ENCODE measurements at regions of chr5 and their contacts with region 1.

Region 1: DNA sequence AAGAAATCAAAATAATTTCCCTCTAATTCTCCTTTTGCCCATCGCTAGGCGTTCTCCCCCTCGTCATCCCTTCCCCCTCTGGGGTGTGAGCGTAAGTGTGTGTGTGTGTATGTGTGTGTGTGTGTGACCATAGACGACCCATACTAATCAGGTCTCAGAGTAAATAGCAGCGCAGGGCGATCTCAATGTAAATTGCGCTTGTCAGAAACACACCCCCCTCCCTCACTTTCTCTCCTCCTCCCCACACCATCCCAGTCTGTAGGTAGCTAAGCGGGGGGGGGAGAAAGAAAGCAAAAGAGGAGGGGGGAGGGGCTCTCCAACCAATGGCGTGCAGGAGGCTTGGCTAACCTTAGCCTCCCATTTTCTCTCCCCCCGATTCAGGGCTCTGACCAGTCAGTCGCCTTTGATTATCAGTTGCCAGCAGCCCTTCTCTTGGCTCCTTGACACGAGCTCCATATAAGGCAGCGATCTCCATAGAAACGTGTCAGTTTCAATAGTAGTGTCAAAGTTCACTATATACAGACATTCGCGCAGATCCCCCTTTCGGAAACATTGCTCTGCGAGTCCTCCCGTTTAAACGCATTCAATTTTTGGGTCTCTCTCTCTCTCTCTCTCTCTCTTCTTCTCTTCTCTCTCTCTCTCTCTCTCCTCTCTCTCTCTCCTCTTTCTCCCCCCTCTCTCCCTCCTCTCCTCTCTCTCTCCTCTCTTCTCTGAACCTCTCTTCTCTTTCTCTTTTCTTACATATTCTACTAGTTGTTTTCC is at the start of gene NR2F1:
- DNase-seq: peak; percentile 74
- H3K4me3 ChIP-seq: peak within 1 kb of the TSS; percentile 75
- H3K27me3 ChIP-seq: no peaks in the 10 kb centered on the region
- CTCF ChIP-seq: no peak
- polyA plus RNA-seq, gene NR2F1: 24.6 and 39.4 TPM in 2 replicates

Region 2: DNA sequence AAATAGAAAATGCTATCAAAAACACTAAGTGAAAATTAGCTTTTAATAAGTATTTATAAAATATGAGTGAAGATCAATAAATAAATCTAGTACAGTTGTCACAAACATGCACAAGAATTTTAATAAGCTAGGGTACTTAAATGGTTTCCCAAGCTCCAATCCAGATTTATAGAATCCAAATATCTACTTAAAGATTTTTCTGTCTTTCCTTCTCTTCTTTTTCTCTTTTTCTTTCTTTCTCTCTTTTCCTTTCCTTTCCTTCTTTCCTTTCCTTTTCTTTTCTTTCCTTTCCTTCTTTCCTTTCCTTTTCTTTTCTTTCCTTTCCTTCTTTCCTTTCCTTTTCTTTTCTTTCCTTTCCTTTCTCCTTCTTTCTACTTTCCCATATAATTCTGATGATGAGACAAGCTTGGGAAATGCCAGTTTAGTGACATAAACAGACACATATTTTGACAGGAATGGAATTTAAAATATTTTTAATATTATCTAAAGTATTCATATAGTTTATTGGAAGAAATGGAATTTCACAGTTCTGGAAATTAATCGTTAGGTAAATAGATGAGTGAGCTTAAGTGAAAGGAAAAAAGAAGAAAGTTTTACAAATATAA is 834.7 kb before region 1 on chr5:
- CTCF ChIA-PET with region 1: no interaction called
- POLR2A ChIA-PET with region 1: interaction called, 18 read pairs
- DNase-seq: no peak
- H3K4me3 ChIP-seq: no peak overlapping the region
- H3K27me3 ChIP-seq: no peaks in the 10 kb centered on the region
- CTCF ChIP-seq: no peak

Region 3: GRCh38 chr5:94784536-94785510 is 1202.0 kb after region 1 on chr5:
- CTCF ChIA-PET with region 1: no interaction called
- POLR2A ChIA-PET with region 1: interaction called, 15 read pairs
- DNase-seq: no peak
- H3K4me3 ChIP-seq: no peak overlapping the region
- H3K27me3 ChIP-seq: no peaks in the 10 kb centered on the region
- CTCF ChIP-seq: peak; percentile 14; the same call in 1 of the 2 replicates